ENCODE measurements at regions of chr10 and their contacts with region 1.

Region 1: GRCh38 chr10:60335708-60336107 is 54.0 kb downstream of the ANK3 start:
- DNase-seq: no peak
- ATAC-seq: no peak
- H3K4me3 Mint-ChIP-seq: no peak overlapping the region
- H3K27ac Mint-ChIP-seq: no peak overlapping the region
- H3K4me1 Mint-ChIP-seq: no peaks in the 10 kb centered on the region
- H3K27me3 Mint-ChIP-seq: no peaks in the 10 kb centered on the region
- CTCF ChIP-seq: no peak

Region 2: DNA sequence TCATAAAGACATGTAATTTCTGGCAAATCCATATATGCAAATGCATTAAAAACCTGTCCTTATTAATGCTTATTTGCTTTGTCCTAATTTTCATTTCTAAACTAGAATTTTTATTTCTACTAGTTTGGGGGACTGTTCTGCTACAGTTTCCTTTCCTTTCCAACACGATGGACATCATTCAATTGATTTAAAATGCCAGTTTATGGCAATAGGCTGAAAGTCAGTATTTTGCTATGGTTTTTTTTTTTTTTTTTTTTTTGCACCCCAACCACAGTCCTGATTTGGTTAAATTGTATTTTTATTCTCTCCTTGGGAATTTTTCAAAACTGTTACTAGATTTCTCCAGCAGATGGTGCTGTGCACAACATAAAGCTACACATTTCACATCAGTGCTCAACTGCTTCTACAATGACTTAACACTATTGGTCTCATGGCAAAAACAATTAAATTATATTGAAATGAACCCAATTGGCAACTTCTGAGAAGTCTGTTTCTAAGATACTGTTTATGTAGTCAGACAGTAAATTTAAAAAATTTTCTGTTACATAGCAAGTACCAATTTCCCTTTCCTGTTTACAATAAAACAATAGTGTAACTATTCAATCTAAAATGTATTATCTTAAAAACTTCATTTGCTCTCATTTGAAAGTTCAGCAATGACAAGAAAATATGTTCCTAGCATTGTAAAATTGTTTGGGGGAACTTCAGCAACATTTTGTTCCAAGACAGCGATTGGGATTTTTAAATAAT is 235.5 kb before region 1 on chr10:
- CTCF ChIA-PET with region 1: no interaction called
- POLR2A ChIA-PET with region 1: no interaction called
- intact Hi-C with region 1: loop called (anchors 5 kb)
- DNase-seq: no peak
- ATAC-seq: no peak
- H3K4me3 Mint-ChIP-seq: no peak overlapping the region
- H3K27ac Mint-ChIP-seq: no peak overlapping the region
- H3K4me1 Mint-ChIP-seq: no peaks in the 10 kb centered on the region
- H3K27me3 Mint-ChIP-seq: no peaks in the 10 kb centered on the region
- CTCF ChIP-seq: peak; percentile 70

Measured in activated B cell treated with CpG ODN at 0.5 μM for 24 hours (primary cell).